ENCODE measurements at regions of chr2 and their contacts with region 1.

Region 1: DNA sequence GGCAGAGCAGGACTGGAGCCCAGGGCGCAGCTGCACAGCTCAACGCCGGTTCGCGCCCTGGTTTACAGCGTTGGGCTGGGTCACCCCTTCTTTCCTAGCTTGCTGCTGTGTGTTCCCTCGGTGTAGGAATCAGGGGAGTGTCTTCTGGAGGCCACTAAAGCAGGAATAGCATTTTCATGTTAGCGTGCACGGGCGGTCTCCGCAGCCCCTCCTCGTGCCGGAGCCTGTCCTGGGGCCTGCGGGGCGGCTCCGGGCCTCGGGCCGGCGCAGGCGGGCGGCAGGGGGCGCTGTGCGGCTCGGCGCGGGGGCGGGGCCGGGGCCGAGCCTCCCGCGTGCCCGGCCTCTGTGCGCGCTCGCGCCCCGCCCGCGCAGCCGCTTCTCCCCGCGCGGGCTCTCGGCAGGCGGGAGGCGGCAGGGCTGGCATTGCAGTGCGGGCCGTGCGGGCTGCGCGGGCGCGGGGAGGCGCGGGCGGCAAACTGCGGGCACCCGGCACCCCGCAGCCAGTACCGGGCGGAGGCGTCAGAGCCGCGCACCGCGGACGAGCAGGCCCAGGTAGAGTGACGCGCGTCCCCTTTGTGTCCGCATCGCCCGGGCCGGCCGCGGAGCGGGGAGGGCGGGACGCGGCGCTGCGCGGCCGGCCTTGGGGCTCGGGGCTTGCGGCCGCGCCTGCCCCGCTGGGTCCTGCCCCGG is at the start of gene RNF144A:
- DNase-seq: peak; percentile 61
- ATAC-seq: peak; percentile 68
- H3K4me3 ChIP-seq: peak within 1 kb of the TSS; percentile 80
- H3K27ac ChIP-seq: no peak within 1 kb of the TSS; the same call in 1 of the 2 replicates
- H3K4me1 ChIP-seq: peaks cover 52% of the 10 kb centered on the region
- H3K27me3 ChIP-seq: no peaks in the 10 kb centered on the region
- CTCF ChIP-seq: peak; percentile 44
- total RNA-seq, gene RNF144A: 9.5 and 13.1 TPM in 2 replicates

Region 2: GRCh38 chr2:6826081-6826913 is 90.9 kb before region 1 on chr2:
- CTCF ChIA-PET with region 1: no interaction called
- POLR2A ChIA-PET with region 1: no interaction called
- intact Hi-C with region 1: loop called (anchors 1 kb)
- DNase-seq: peak; percentile 93
- ATAC-seq: peak; percentile 90
- H3K4me3 ChIP-seq: no peak overlapping the region
- H3K27ac ChIP-seq: peak overlapping the region; percentile 94
- H3K4me1 ChIP-seq: peaks cover 17% of the 10 kb centered on the region
- H3K27me3 ChIP-seq: peaks cover 14% of the 10 kb centered on the region; the same call in 1 of the 2 replicates
- CTCF ChIP-seq: peak; percentile 94

Region 3: DNA sequence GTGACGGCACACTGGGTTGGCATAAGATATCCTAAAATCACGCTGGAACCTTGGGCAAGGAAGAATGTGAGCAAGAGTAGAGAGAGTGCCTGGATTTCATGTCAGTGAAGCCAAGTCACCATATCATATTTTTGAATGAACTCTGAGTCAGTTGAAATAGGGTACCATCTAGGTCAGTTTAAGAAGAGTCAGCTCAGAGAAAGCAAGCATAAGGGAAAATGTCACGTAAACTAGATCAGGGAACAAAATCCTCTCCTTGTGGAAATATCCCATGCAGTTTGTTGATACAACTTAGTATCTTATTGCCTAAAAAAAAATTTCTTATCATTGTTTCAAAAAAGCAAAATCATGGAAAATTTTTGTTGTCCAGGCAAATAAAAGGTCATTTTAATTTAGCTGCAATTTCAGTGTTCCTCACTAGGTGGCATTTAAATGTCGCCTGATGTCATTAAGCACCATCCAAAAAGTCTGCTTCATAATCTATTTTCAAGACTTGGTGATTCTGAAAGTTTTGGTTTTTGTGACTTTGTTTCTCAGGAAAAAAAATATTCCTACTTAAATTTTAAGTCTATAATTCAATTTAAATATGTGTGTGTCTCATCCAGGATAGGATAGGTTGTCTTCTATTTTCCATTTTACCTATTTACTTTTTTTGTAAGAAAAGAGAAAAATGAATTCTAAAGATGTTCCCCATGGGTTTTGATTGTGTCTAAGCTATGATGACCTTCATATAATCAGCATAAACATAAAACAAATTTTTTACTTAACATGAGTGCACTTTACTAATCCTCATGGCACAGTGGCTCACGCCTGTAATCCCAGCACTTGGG is 20.1 kb before region 1 on chr2:
- CTCF ChIA-PET with region 1: interaction called, 6 read pairs
- POLR2A ChIA-PET with region 1: no interaction called
- intact Hi-C with region 1: loop called (anchors 1 kb)
- DNase-seq: peak; percentile 72
- ATAC-seq: peak; percentile 56
- H3K4me3 ChIP-seq: no peak overlapping the region
- H3K27ac ChIP-seq: no peak overlapping the region
- H3K4me1 ChIP-seq: no peaks in the 10 kb centered on the region
- H3K27me3 ChIP-seq: no peaks in the 10 kb centered on the region
- CTCF ChIP-seq: peak; percentile 84

Region 4: DNA sequence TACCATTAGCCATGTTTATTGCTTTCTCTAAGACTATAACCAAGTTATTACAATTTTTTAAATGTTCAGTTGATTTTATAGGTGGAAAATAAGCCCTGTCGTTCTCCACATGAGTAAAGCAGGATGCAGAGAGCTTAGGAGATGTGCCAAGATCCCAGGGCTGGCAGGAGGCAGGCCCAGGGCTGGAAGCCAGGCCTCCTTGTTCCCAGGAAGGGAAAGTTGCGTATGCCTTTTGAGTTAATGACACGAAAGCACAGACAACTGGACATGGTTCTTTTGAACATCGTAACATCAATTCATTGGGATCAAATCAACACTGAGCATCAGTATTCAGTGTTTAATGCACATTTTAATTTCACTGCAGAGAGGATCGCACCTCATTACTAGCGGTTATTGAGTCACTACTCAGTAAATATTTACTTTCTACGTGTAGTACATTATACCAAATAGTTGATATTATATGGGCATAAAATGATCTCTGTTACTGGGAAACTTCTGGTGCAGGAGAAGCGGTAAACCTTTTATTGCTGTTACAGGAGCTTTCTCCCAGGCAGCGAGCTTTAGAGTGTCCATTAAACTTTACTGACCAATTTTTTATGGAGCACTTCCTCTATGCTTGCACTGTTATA is 60.0 kb after region 1 on chr2:
- CTCF ChIA-PET with region 1: no interaction called
- POLR2A ChIA-PET with region 1: no interaction called
- intact Hi-C with region 1: loop called (anchors 1 kb)
- DNase-seq: peak; percentile 87
- ATAC-seq: peak; percentile 60
- H3K4me3 ChIP-seq: peak overlapping the region; percentile 41
- H3K27ac ChIP-seq: peak overlapping the region; percentile 98
- H3K4me1 ChIP-seq: peaks cover 59% of the 10 kb centered on the region
- H3K27me3 ChIP-seq: no peaks in the 10 kb centered on the region
- CTCF ChIP-seq: no peak

Region 5: GRCh38 chr2:7011356-7012083 is 94.3 kb after region 1 on chr2:
- CTCF ChIA-PET with region 1: interaction called, 3 read pairs
- POLR2A ChIA-PET with region 1: interaction called, 3 read pairs
- intact Hi-C with region 1: loop called (anchors 2 kb)
- DNase-seq: peak; percentile 96
- ATAC-seq: peak; percentile 71
- H3K4me3 ChIP-seq: no peak overlapping the region
- H3K27ac ChIP-seq: peak overlapping the region; percentile 99
- H3K4me1 ChIP-seq: peaks cover 77% of the 10 kb centered on the region
- H3K27me3 ChIP-seq: no peaks in the 10 kb centered on the region
- CTCF ChIP-seq: no peak

Region 6: GRCh38 chr2:7031547-7032245 is 114.5 kb after region 1 on chr2:
- CTCF ChIA-PET with region 1: interaction called, 4 read pairs
- POLR2A ChIA-PET with region 1: no interaction called
- intact Hi-C with region 1: loop called (anchors 5 kb)
- DNase-seq: peak; percentile 100
- ATAC-seq: peak; percentile 86
- H3K4me3 ChIP-seq: no peak overlapping the region
- H3K27ac ChIP-seq: peak overlapping the region; percentile 59
- H3K4me1 ChIP-seq: peaks cover 16% of the 10 kb centered on the region
- H3K27me3 ChIP-seq: no peaks in the 10 kb centered on the region
- CTCF ChIP-seq: peak; percentile 48; the same call in 1 of the 2 replicates

Region 7: DNA sequence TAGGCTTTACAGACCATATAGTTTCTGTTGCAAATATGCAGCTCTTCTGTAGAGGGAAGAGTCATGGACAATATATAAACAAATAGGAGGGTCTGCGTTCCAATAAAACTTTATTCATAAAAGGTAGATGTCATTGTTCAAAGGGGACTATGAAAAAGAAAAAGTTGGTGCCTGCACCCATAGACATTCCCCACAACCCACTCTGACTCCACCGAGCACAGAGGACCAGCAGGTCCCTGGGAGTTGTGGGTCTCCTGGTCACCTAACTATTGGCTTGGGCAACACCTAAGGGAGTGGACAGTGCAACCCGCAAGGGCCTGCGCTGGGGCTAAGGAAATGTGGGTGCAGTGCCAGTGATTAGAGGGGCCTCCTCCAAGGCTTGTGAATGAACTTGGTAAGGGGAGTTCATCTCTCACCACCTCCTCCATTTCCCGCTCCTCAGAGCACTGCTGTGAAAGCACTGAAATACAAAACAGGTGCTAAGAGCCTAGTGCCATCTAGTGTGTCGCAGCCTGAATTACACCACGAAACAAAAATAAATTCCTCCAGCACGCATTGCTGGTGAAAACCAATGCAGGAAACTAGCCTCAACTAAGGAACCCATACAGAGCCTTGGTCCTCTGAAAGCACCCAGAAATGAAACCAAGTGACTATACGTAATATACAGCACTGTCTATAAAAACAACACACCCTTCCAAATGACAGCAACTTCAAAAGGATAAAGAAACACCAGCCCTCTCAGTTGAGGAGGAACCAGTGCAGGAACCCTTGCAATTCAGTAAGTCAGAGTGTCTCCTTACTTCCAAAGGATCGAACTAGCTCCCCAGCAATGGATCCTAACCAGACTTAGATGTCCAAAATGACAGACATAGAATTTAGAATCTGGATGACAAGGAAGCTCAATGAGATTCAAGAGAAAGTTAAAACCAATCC is 166.6 kb after region 1 on chr2:
- CTCF ChIA-PET with region 1: no interaction called
- POLR2A ChIA-PET with region 1: interaction called, 5 read pairs
- intact Hi-C with region 1: loop called (anchors 5 kb)
- DNase-seq: peak; percentile 77
- ATAC-seq: peak; percentile 74
- H3K4me3 ChIP-seq: no peak overlapping the region
- H3K27ac ChIP-seq: no peak overlapping the region
- H3K4me1 ChIP-seq: no peaks in the 10 kb centered on the region; the same call in 1 of the 2 replicates
- H3K27me3 ChIP-seq: 0 out of 2 replicates have a peak, but pooled peaks cover 6% of the 10 kb centered on the region
- CTCF ChIP-seq: peak; percentile 85

Measured in PC-3 (cell line).